Activated CD4-positive, alpha-beta T cell treated with anti-CD3 and anti-CD28 coated beads, Interleukin-2, amount 10 ng/mL, durations not matched to agents 24 days and 14 days (primary cell): ENCODE measurements at regions of chr15 and their contacts with region 1.

Region 1: DNA sequence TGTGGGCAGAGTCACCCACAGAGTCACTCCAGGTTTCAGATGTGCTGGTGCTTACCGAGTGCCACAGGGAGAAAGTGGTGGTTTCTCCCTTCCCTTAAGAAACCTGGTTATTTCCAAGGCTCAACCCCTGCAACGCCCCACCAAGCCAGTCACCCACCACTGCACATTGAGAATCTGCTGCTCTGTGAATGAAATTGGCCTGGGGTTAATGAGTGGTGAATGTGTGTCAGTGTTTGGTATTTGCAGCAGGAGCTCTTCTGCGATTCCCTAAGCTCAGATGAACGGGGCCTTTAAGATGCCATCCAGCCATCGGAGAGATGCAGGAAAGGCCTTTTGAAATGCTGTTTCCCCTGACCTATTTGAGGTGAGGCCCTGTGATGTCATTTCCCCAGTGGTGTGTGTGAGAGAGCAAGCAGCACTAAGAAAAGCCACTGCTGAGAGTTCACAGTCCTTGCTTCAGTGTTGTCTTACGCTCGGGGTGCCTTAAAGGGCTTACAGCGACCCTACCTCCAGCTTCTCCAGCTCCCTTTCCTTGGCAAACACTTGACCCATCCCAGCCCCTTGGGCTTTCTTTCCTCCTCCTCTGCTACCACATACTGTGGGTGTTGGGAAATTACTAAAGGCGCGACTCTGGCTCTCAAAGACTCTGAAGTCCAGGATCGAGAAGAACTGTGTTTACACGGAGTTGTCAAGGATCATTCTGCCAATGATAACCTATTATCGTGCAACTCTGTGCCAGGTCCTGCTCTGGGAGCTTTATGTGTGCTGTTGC is 68.9 kb downstream of the SMAD3 start:
- DNase-seq: peak; percentile 92
- H3K4me3 Mint-ChIP-seq: peak overlapping the region; percentile 80
- H3K27ac Mint-ChIP-seq: peak overlapping the region; percentile 92
- H3K4me1 Mint-ChIP-seq: peaks cover 81% of the 10 kb centered on the region
- H3K27me3 Mint-ChIP-seq: no peaks in the 10 kb centered on the region

Region 2: DNA sequence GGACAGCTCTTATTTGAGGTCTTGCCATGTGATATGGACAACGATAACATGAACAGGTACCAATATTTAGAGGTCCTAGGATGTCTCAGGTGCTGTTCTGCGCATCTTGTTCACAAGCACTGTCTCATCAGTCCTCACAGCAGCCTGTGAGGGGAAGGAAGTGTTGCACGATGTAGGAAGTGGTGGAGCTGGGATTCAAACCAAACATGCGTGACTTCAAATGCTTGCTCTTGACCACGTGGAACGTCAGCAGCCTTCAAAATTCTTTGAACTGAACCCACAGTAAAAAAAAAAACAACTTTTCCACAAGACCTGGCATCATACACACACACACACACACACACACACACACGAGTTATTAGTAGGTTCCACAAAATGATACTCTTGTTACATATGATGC is 222.3 kb before region 1 on chr15:
- intact Hi-C with region 1: no loop called
- DNase-seq: peak; percentile 86
- H3K4me3 Mint-ChIP-seq: peak overlapping the region; percentile 46
- H3K27ac Mint-ChIP-seq: peak overlapping the region; percentile 30
- H3K4me1 Mint-ChIP-seq: peaks cover 26% of the 10 kb centered on the region
- H3K27me3 Mint-ChIP-seq: peaks cover 12% of the 10 kb centered on the region

Region 3: GRCh38 chr15:67120839-67121643 is 13.2 kb before region 1 on chr15:
- intact Hi-C with region 1: loop called (anchors 2 kb)
- DNase-seq: peak; percentile 96
- H3K4me3 Mint-ChIP-seq: peak overlapping the region; percentile 87
- H3K27ac Mint-ChIP-seq: peak overlapping the region; percentile 99
- H3K4me1 Mint-ChIP-seq: peaks cover 86% of the 10 kb centered on the region
- H3K27me3 Mint-ChIP-seq: no peaks in the 10 kb centered on the region

Region 4: DNA sequence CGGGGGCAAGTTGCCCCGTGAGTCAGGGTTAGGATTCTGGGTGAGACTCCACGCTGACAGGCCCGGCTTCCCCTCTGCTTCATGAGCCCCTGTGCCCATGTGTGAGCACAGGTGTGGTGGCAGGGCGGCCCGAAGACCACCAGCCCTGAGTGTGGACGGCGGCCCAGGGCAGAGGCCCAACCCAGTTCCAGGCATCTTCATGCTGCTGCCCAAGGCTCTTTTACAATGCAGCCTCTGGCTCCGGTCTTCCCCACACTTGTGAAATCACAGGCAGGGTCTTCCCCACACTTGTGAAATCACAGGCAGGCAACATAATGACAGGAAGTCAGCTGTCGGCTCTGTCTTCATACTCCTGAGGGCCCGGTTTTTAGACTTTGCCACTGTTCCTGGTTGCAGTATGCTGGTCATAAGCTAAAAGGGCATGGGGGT is 41.4 kb after region 1 on chr15:
- intact Hi-C with region 1: loop called (anchors 5 kb)
- DNase-seq: peak; percentile 71
- H3K4me3 Mint-ChIP-seq: peak overlapping the region; percentile 24
- H3K27ac Mint-ChIP-seq: peak overlapping the region; percentile 82
- H3K4me1 Mint-ChIP-seq: peaks cover 63% of the 10 kb centered on the region
- H3K27me3 Mint-ChIP-seq: no peaks in the 10 kb centered on the region